Transverse colon (tissue), 4 donors: ENCODE measurements at regions of chr14 and their contacts with region 1.

Region 1: GRCh38 chr14:70239802-70240201 is 51.1 kb upstream of the SLC8A3 start:
- DNase-seq: no peak
- H3K4me3 ChIP-seq: no peak overlapping the region
- H3K27ac ChIP-seq: no peak overlapping the region
- H3K4me1 ChIP-seq: no peaks in the 10 kb centered on the region
- H3K27me3 ChIP-seq: no peaks in the 10 kb centered on the region
- CTCF ChIP-seq: no peak
- EP300 ChIP-seq: no peak
- POLR2A ChIP-seq: no peak

Region 2: DNA sequence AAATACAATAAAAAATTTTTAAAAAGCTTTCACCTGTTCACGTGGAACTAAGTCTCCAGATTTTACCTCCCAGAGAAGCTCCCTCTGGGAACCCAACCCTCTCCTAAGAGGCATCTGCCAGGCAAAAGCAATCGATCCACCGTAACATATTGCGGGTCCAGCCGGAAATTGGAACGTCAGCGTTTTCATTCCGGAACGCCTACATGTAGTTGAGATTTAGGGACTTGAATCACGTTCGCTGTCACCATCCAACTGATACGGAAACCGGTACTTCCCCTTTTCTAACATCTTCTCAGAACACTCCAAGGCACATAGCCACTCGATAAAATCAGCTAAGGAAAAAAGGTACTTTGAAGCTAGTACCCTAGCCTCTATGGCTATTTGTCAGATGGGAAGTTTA is 49.3 kb after region 1 on chr14:
- in situ Hi-C with region 1: no loop called
- intact Hi-C with region 1: no loop called
- DNase-seq: no peak
- H3K4me3 ChIP-seq: no peak overlapping the region
- H3K27ac ChIP-seq: no peak overlapping the region
- H3K4me1 ChIP-seq: no peaks in the 10 kb centered on the region
- H3K27me3 ChIP-seq: no peaks in the 10 kb centered on the region
- CTCF ChIP-seq: no peak
- EP300 ChIP-seq: no peak
- POLR2A ChIP-seq: no peak

Region 3: DNA sequence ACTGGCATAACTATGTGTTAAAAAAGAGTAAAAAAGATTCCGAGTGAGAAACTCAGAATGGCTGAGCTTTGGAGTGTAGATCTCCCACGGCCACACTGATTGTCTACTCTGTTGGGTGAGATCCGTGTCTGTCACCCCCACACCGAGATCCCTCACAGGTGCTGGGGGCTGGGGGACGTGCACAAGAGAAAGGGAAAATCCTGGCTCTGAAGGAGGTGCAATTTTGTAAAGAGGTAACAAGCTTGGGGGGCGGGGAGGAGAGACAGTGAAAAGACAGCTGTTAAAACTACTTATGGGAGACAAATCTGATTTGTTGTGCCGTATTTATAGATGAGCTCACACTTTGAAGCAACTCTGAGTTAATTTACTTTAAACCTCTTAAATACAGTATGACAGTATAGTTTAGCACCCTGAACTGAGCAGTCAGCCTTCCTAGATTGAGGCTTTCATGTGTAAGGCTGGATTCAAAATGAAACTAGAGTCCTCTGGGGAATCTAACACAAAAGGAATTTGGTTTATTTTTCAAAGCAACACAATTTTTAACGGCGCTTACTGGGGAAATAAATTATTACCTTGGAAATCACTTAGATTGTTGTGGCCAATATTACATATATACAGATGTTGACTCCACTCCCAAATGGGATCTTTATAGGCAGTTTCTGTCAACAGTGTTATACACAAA is 1525.0 kb after region 1 on chr14:
- in situ Hi-C with region 1: no loop called
- intact Hi-C with region 1: loop called (anchors 10 kb)
- DNase-seq: no peak
- H3K4me3 ChIP-seq: no peak overlapping the region
- H3K27ac ChIP-seq: no peak overlapping the region
- H3K4me1 ChIP-seq: no peaks in the 10 kb centered on the region
- H3K27me3 ChIP-seq: no peaks in the 10 kb centered on the region
- CTCF ChIP-seq: no peak
- EP300 ChIP-seq: no peak
- POLR2A ChIP-seq: no peak